ENCODE measurements at regions of chr16 and their contacts with region 1.

Region 1: GRCh38 chr16:67855491-67856188 is 8.1 kb upstream of the CENPT start:
- DNase-seq: no peak
- H3K4me3 ChIP-seq: no peak overlapping the region
- H3K27ac ChIP-seq: peak overlapping the region; percentile 42
- H3K4me1 ChIP-seq: no peaks in the 10 kb centered on the region
- H3K27me3 ChIP-seq: no peaks in the 10 kb centered on the region
- CTCF ChIP-seq: no peak

Region 2: GRCh38 chr16:67872786-67873537 is 17.3 kb after region 1 on chr16 and contains the start of gene EDC4:
- CTCF ChIA-PET with region 1: no interaction called
- POLR2A ChIA-PET with region 1: no interaction called
- intact Hi-C with region 1: no loop called
- DNase-seq: peak; percentile 88
- H3K4me3 ChIP-seq: peak within 1 kb of the TSS; percentile 83
- H3K27ac ChIP-seq: peak within 1 kb of the TSS; percentile 81
- H3K4me1 ChIP-seq: peaks cover 13% of the 10 kb centered on the region
- H3K27me3 ChIP-seq: no peaks in the 10 kb centered on the region
- CTCF ChIP-seq: no peak
- total RNA-seq, gene EDC4: 99.6 and 99.9 TPM in 2 replicates

Region 3: GRCh38 chr16:69036399-69037091 is 1180.9 kb after region 1 on chr16:
- CTCF ChIA-PET with region 1: no interaction called
- POLR2A ChIA-PET with region 1: interaction called, 16 read pairs
- intact Hi-C with region 1: no loop called
- DNase-seq: no peak
- H3K4me3 ChIP-seq: no peak overlapping the region
- H3K27ac ChIP-seq: no peak overlapping the region
- H3K4me1 ChIP-seq: peaks cover 7% of the 10 kb centered on the region
- H3K27me3 ChIP-seq: no peaks in the 10 kb centered on the region
- CTCF ChIP-seq: no peak

Measured in A673 (cell line).